Caco-2 (cell line): ENCODE measurements at regions of chr12 and their contacts with region 1.

Region 1: GRCh38 chr12:66087365-66087943 is 43.1 kb downstream of the LLPH start:
- DNase-seq: peak; percentile 66 to 78
- H3K4me3 ChIP-seq: no peak overlapping the region
- H3K4me3 Mint-ChIP-seq: no peak overlapping the region
- H3K27ac Mint-ChIP-seq: no peak overlapping the region
- H3K4me1 ChIP-seq: peaks cover 19% of the 10 kb centered on the region
- H3K4me1 Mint-ChIP-seq: peaks cover 13% of the 10 kb centered on the region
- H3K27me3 ChIP-seq: no peaks in the 10 kb centered on the region
- H3K27me3 Mint-ChIP-seq: no peaks in the 10 kb centered on the region
- CTCF ChIP-seq: peak; percentile 73 to 81

Region 2: DNA sequence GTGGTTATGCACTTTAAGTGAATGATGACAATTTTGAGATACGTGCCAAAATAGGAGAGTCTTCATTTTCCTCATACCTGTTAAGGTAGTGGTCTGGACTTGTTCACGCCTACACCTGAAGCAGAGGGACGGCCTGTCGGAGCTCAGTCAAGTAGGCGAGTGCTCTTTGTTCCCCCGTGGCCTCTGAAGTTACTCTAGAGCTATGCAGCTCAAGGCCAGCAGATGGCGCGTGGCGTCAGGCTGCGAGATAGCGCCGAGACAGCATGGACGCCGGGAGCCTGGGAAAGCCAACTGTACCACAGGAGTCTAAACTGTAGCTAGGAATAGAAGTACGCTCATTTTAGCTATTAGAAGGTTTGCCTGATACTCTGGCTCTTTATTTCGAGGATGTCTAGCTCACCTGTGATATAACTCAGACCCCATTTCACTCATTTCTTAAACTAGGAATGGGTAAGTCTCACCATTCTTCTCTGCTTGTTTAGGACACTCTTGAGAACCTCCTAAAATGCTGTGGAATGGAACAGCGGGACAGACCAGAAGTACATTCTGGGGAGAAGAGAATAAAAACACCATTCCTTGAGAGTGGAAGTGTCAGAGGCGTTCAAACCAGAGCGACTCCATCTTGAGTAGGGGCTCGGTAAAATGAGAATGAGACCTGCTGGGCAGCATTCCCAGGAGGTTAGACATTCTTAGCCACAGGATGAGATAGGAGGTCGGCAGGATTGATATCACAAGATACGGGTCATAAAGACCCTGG is 530.6 kb before region 1 on chr12:
- CTCF ChIA-PET with region 1: interaction called, 8 read pairs
- POLR2A ChIA-PET with region 1: no interaction called
- intact Hi-C with region 1: loop called (anchors 1 kb)
- DNase-seq: peak; percentile 80 to 82
- H3K4me3 ChIP-seq: no peak overlapping the region
- H3K4me3 Mint-ChIP-seq: no peak overlapping the region
- H3K27ac Mint-ChIP-seq: no peak overlapping the region
- H3K4me1 ChIP-seq: peaks cover 9% of the 10 kb centered on the region
- H3K4me1 Mint-ChIP-seq: no peaks in the 10 kb centered on the region
- H3K27me3 ChIP-seq: no peaks in the 10 kb centered on the region
- H3K27me3 Mint-ChIP-seq: no peaks in the 10 kb centered on the region
- CTCF ChIP-seq: peak; percentile 81 to 85

Region 3: DNA sequence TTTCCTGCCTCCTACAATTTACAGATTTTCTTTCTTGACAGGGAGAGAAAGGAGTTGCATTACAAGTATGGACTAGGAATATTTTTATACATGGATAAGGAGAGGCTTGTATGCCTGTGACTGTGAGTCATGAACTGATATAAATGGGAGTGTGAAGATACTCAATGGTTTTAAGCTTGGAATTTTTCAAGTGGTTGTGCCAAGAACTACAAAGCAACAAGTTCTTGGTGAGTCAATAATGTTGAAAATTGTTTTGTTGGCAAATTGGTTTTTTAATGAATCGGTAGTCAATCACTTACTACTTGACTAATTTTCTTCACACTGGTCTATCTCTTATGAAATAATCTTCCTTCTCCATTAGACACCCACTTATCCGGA is 322.0 kb before region 1 on chr12:
- CTCF ChIA-PET with region 1: no interaction called
- POLR2A ChIA-PET with region 1: no interaction called
- intact Hi-C with region 1: no loop called
- DNase-seq: no peak
- H3K4me3 ChIP-seq: no peak overlapping the region
- H3K4me3 Mint-ChIP-seq: no peak overlapping the region
- H3K27ac Mint-ChIP-seq: no peak overlapping the region
- H3K4me1 ChIP-seq: no peaks in the 10 kb centered on the region
- H3K4me1 Mint-ChIP-seq: no peaks in the 10 kb centered on the region
- H3K27me3 ChIP-seq: no peaks in the 10 kb centered on the region
- H3K27me3 Mint-ChIP-seq: no peaks in the 10 kb centered on the region
- CTCF ChIP-seq: no peak

Region 4: GRCh38 chr12:65895759-65896656 is 191.4 kb before region 1 on chr12:
- CTCF ChIA-PET with region 1: no interaction called
- POLR2A ChIA-PET with region 1: no interaction called
- intact Hi-C with region 1: loop called (anchors 2 kb)
- DNase-seq: peak; percentile 64 to 80
- H3K4me3 ChIP-seq: peak overlapping the region; percentile 16; the same call in 1 of the 2 replicates
- H3K4me3 Mint-ChIP-seq: peak overlapping the region; percentile 69
- H3K27ac Mint-ChIP-seq: peak overlapping the region; percentile 85
- H3K4me1 ChIP-seq: peaks cover 64% of the 10 kb centered on the region
- H3K4me1 Mint-ChIP-seq: peaks cover 68% of the 10 kb centered on the region
- H3K27me3 ChIP-seq: no peaks in the 10 kb centered on the region
- H3K27me3 Mint-ChIP-seq: no peaks in the 10 kb centered on the region
- CTCF ChIP-seq: no peak

Region 5: GRCh38 chr12:65986047-65986446 is 101.4 kb before region 1 on chr12:
- CTCF ChIA-PET with region 1: no interaction called
- POLR2A ChIA-PET with region 1: no interaction called
- intact Hi-C with region 1: loop called (anchors 1 kb)
- DNase-seq: no peak
- H3K4me3 ChIP-seq: no peak overlapping the region
- H3K4me3 Mint-ChIP-seq: no peak overlapping the region
- H3K27ac Mint-ChIP-seq: no peak overlapping the region
- H3K4me1 ChIP-seq: no peaks in the 10 kb centered on the region
- H3K4me1 Mint-ChIP-seq: peaks cover 4% of the 10 kb centered on the region
- H3K27me3 ChIP-seq: no peaks in the 10 kb centered on the region
- H3K27me3 Mint-ChIP-seq: no peaks in the 10 kb centered on the region
- CTCF ChIP-seq: no peak

Region 6: DNA sequence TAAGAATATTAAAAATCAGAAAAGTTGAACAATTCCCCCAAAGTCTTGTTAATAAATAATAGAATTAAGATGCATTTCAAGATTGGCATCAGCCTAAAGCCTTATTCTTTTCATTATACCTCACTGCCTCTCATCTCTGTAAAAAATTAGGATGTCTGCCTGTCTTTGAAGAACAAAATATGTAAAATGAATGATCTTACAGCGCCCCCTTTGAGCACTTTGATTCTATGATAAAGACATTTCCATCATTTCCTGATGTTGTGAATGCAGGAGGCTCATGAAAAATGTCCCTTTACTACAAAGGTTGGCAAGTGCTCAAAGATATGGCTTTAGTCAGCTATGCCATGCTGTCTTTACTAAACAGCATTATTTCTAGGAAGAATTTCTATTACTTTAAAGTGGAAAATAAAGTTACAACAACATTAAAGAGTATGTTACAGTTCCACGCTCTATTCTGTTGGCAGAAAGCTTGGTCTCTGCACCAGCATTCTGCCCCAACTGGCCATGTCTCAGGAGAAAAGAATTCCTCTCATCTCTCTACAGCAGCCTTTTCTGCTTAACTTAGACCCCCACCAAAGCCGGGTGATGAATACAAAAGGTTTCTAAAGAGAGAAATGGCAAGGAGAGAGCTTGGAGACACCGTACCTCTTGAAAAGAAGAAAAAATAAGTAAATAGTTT is 52.0 kb before region 1 on chr12:
- CTCF ChIA-PET with region 1: no interaction called
- POLR2A ChIA-PET with region 1: no interaction called
- intact Hi-C with region 1: no loop called
- DNase-seq: peak in 1 of 2 experiments; percentile 25
- H3K4me3 ChIP-seq: no peak overlapping the region
- H3K4me3 Mint-ChIP-seq: no peak overlapping the region
- H3K27ac Mint-ChIP-seq: no peak overlapping the region
- H3K4me1 ChIP-seq: peaks cover 8% of the 10 kb centered on the region
- H3K4me1 Mint-ChIP-seq: peaks cover 13% of the 10 kb centered on the region
- H3K27me3 ChIP-seq: no peaks in the 10 kb centered on the region
- H3K27me3 Mint-ChIP-seq: no peaks in the 10 kb centered on the region
- CTCF ChIP-seq: peak in 1 of 2 experiments; percentile 12

Region 7: GRCh38 chr12:66060163-66060907 is 27.1 kb before region 1 on chr12:
- CTCF ChIA-PET with region 1: no interaction called
- POLR2A ChIA-PET with region 1: no interaction called
- intact Hi-C with region 1: loop called (anchors 1 kb)
- DNase-seq: peak; percentile 31 to 35
- H3K4me3 ChIP-seq: no peak overlapping the region
- H3K4me3 Mint-ChIP-seq: peak overlapping the region; percentile 40
- H3K27ac Mint-ChIP-seq: no peak overlapping the region
- H3K4me1 ChIP-seq: peaks cover 23% of the 10 kb centered on the region
- H3K4me1 Mint-ChIP-seq: peaks cover 21% of the 10 kb centered on the region
- H3K27me3 ChIP-seq: no peaks in the 10 kb centered on the region
- H3K27me3 Mint-ChIP-seq: no peaks in the 10 kb centered on the region
- CTCF ChIP-seq: no peak

Region 8: GRCh38 chr12:66156654-66157053 is 69.2 kb after region 1 on chr12:
- CTCF ChIA-PET with region 1: no interaction called
- POLR2A ChIA-PET with region 1: no interaction called
- intact Hi-C with region 1: no loop called
- DNase-seq: no peak
- H3K4me3 ChIP-seq: no peak overlapping the region
- H3K4me3 Mint-ChIP-seq: no peak overlapping the region
- H3K27ac Mint-ChIP-seq: no peak overlapping the region
- H3K4me1 ChIP-seq: no peaks in the 10 kb centered on the region
- H3K4me1 Mint-ChIP-seq: no peaks in the 10 kb centered on the region
- H3K27me3 ChIP-seq: no peaks in the 10 kb centered on the region
- H3K27me3 Mint-ChIP-seq: no peaks in the 10 kb centered on the region
- CTCF ChIP-seq: no peak

Region 9: DNA sequence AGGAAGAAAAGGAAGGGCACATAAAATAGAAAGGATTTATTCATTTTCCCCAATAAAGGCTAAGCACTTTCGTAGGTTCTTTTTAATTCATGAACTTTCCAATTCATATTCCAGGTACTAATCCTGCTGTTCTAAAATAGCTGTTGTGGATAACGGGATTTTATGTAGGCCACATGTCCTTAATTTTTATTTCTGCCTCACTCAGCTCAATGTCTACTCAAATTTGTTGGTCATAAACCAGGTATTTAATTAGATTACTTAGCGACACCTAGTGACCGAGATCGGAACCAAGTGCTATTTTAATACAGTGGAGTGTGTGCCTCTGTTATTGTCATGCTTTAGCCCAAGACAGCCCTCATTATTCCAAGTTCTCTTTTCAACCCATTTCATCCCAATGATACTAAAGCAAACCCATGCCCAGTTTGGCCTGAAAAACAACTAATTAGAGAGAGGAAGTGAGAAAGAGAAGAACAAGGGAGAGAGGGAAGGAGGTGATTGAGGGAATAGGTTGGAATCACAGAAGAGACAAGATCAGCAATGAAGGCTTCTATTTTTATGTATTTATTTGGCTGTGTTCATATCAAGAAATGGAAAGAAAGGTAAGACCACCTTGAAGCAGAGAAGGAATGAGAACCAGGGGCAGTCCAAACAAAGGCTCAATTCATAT is 1855.9 kb after region 1 on chr12:
- CTCF ChIA-PET with region 1: no interaction called
- POLR2A ChIA-PET with region 1: no interaction called
- intact Hi-C with region 1: loop called (anchors 2 kb)
- DNase-seq: peak; percentile 58 to 59
- H3K4me3 ChIP-seq: no peak overlapping the region
- H3K4me3 Mint-ChIP-seq: no peak overlapping the region
- H3K27ac Mint-ChIP-seq: no peak overlapping the region
- H3K4me1 ChIP-seq: peaks cover 15% of the 10 kb centered on the region
- H3K4me1 Mint-ChIP-seq: peaks cover 9% of the 10 kb centered on the region
- H3K27me3 ChIP-seq: no peaks in the 10 kb centered on the region; the same call in 1 of the 2 replicates
- H3K27me3 Mint-ChIP-seq: peaks cover 9% of the 10 kb centered on the region
- CTCF ChIP-seq: peak; percentile 48 to 58